ENCODE measurements at regions of chr1 and their contacts with region 1.

Region 1: DNA sequence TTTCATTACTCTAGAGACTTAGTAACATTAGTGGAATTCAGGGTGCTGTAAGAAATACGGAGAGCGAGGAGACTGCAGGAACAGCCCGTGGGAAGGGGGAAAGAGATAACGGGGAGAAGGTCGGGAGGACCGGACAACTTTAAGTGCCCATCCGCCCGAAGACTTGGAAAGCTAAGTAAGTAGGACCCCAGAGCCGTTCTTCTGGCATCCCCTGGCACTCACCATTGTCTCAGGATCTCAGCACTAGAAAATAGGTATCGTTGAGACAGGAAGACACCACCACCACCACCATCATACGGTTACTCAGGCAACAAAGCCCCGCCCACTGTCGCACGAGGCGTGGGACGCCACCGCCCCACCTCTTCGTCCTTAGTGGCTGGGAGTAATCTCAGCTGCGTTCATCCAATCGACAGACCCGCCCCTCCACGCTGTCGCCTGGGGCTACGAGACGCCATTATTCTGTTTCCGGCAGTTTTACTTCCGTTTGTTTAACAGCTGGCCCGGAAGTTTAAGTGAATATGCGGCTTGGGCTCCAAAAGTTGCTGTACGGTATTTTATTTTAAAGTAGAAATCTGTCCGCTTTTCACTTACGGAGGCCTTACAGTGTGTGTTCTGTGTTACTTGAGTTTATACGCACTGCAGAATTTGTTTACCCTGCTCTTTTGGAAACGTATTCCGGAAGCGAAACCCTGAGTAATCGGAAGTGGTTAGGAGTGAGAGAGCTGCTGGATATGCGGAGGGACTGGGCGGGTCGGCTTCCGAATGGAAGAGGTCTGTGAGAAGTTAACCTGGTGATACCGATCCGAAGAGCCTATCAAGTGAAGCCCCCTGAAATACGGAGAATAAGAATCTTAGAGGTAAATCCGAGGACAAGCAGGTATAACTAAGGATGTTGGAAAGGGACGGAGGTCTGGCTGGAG is at the starts of genes BLZF1 and NME7:
- DNase-seq: peak; percentile 97 to 99
- ATAC-seq: peak; percentile 98 to 100 (median 99)
- H3K4me3 ChIP-seq: peak within 1 kb of the TSS; percentile 70
- H3K4me3 Mint-ChIP-seq: no peak within 1 kb of the TSS
- H3K27ac ChIP-seq: peak within 1 kb of the TSS; percentile 77
- H3K27ac Mint-ChIP-seq: no peak within 1 kb of the TSS
- H3K4me1 ChIP-seq: peaks cover 10% of the 10 kb centered on the region
- H3K4me1 Mint-ChIP-seq: peaks cover 6 to 12% of the 10 kb centered on the region in 2 donors
- H3K27me3 ChIP-seq: no peaks in the 10 kb centered on the region
- H3K27me3 Mint-ChIP-seq: no peaks in the 10 kb centered on the region
- CTCF ChIP-seq: no peak
- total RNA-seq, gene BLZF1: 13.2 to 21.6 (median 18.2) TPM
- total RNA-seq, gene NME7: 5.2 to 9.9 (median 9.8) TPM

Region 2: GRCh38 chr1:167936068-167936929 is 1431.4 kb before region 1 on chr1 and contains the start of gene DCAF6:
- intact Hi-C with region 1: loop called (anchors 5 kb)
- DNase-seq: peak; percentile 95 to 99
- ATAC-seq: peak; percentile 81 to 93 (median 84)
- H3K4me3 ChIP-seq: peak within 1 kb of the TSS; percentile 90
- H3K4me3 Mint-ChIP-seq: peak within 1 kb of the TSS; percentile 93
- H3K27ac ChIP-seq: peak within 1 kb of the TSS; percentile 95
- H3K27ac Mint-ChIP-seq: peak within 1 kb of the TSS; percentile 93 to 98
- H3K4me1 ChIP-seq: peaks cover 8% of the 10 kb centered on the region
- H3K4me1 Mint-ChIP-seq: peaks cover 34 to 41% of the 10 kb centered on the region in 2 donors
- H3K27me3 ChIP-seq: no peaks in the 10 kb centered on the region
- H3K27me3 Mint-ChIP-seq: no peaks in the 10 kb centered on the region
- CTCF ChIP-seq: no peak
- total RNA-seq, gene DCAF6: 21.8 to 31.8 (median 27.8) TPM

Region 3: GRCh38 chr1:168225476-168226190 is 1142.1 kb before region 1 on chr1 and contains the start of gene SFT2D2:
- intact Hi-C with region 1: loop called (anchors 5 kb)
- DNase-seq: peak; percentile 83 to 88
- ATAC-seq: peak; percentile 95 to 97 (median 96)
- H3K4me3 ChIP-seq: peak within 1 kb of the TSS; percentile 91
- H3K4me3 Mint-ChIP-seq: peak within 1 kb of the TSS; percentile 90
- H3K27ac ChIP-seq: peak within 1 kb of the TSS; percentile 81
- H3K27ac Mint-ChIP-seq: peak within 1 kb of the TSS; percentile 87 to 94
- H3K4me1 ChIP-seq: peaks cover 38% of the 10 kb centered on the region
- H3K4me1 Mint-ChIP-seq: peaks cover 47 to 54% of the 10 kb centered on the region in 2 donors
- H3K27me3 ChIP-seq: no peaks in the 10 kb centered on the region
- H3K27me3 Mint-ChIP-seq: no peaks in the 10 kb centered on the region
- CTCF ChIP-seq: no peak
- total RNA-seq, gene SFT2D2: 91.8 to 118 (median 116) TPM

Region 4: DNA sequence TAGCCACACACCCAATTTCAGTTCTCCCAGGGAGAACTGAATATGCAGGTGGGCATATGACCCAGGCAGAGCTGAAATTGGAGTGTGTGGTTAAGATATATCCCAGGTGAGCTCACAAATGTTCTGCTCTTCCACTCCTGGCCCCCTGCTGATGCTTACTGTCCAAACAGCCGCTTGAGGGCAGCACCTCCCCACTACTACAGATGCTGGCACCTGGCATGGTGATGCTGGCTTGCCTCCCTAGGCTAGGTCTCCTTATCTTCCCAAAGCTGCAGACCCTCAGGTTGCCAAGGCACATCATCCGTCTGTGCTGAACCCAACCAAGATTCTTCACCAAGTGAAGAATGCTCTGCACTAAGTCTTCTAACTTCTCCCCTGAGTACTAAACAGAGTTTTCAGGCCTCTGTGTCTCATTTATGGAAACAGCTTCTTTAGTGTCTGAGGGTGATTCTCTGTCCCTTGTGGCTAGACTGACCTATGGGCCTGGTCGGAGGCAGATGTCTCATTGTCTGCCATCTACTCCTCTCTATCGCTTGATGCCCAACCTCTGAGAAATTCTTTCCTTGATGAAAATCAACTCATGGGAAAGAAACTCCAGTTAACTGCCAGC is 764.1 kb before region 1 on chr1:
- intact Hi-C with region 1: loop called (anchors 1 kb)
- DNase-seq: peak; percentile 60 to 81
- ATAC-seq: peak; percentile 74 to 98 (median 93)
- H3K4me3 ChIP-seq: no peak overlapping the region
- H3K4me3 Mint-ChIP-seq: no peak overlapping the region
- H3K27ac ChIP-seq: no peak overlapping the region
- H3K27ac Mint-ChIP-seq: no peak overlapping the region
- H3K4me1 ChIP-seq: no peaks in the 10 kb centered on the region
- H3K4me1 Mint-ChIP-seq: peaks cover 0 to 4% of the 10 kb centered on the region in 2 donors
- H3K27me3 ChIP-seq: no peaks in the 10 kb centered on the region
- H3K27me3 Mint-ChIP-seq: peaks cover 2 to 8% of the 10 kb centered on the region in 2 donors
- CTCF ChIP-seq: peak; percentile 82

Region 5: GRCh38 chr1:169312084-169312954 is 55.4 kb before region 1 on chr1:
- intact Hi-C with region 1: loop called (anchors 5 kb)
- DNase-seq: peak; percentile 44 to 56
- ATAC-seq: peak; percentile 87 to 94 (median 91)
- H3K4me3 ChIP-seq: no peak overlapping the region
- H3K4me3 Mint-ChIP-seq: peak overlapping the region; percentile 4
- H3K27ac ChIP-seq: no peak overlapping the region
- H3K27ac Mint-ChIP-seq: peak overlapping the region; percentile 54 to 67
- H3K4me1 ChIP-seq: peaks cover 3% of the 10 kb centered on the region
- H3K4me1 Mint-ChIP-seq: peaks cover 18 to 19% of the 10 kb centered on the region in 2 donors
- H3K27me3 ChIP-seq: no peaks in the 10 kb centered on the region
- H3K27me3 Mint-ChIP-seq: no peaks in the 10 kb centered on the region
- CTCF ChIP-seq: no peak

Region 6: GRCh38 chr1:169451218-169451845 is 83.6 kb after region 1 on chr1:
- intact Hi-C with region 1: no loop called
- DNase-seq: no peak
- ATAC-seq: no peak
- H3K4me3 ChIP-seq: no peak overlapping the region
- H3K4me3 Mint-ChIP-seq: no peak overlapping the region
- H3K27ac ChIP-seq: no peak overlapping the region
- H3K27ac Mint-ChIP-seq: no peak overlapping the region
- H3K4me1 ChIP-seq: no peaks in the 10 kb centered on the region
- H3K4me1 Mint-ChIP-seq: peaks cover 0 to 5% of the 10 kb centered on the region in 2 donors
- H3K27me3 ChIP-seq: peaks cover 2% of the 10 kb centered on the region
- H3K27me3 Mint-ChIP-seq: peaks cover 11 to 38% of the 10 kb centered on the region in 2 donors
- CTCF ChIP-seq: no peak

Region 7: GRCh38 chr1:169653873-169654272 is 286.1 kb after region 1 on chr1:
- intact Hi-C with region 1: no loop called
- DNase-seq: no peak
- ATAC-seq: no peak
- H3K4me3 ChIP-seq: no peak overlapping the region
- H3K4me3 Mint-ChIP-seq: no peak overlapping the region
- H3K27ac ChIP-seq: no peak overlapping the region
- H3K27ac Mint-ChIP-seq: no peak overlapping the region
- H3K4me1 ChIP-seq: peaks cover 13% of the 10 kb centered on the region
- H3K4me1 Mint-ChIP-seq: peaks cover 53 to 56% of the 10 kb centered on the region in 2 donors
- H3K27me3 ChIP-seq: no peaks in the 10 kb centered on the region
- H3K27me3 Mint-ChIP-seq: no peaks in the 10 kb centered on the region
- CTCF ChIP-seq: no peak

Region 8: DNA sequence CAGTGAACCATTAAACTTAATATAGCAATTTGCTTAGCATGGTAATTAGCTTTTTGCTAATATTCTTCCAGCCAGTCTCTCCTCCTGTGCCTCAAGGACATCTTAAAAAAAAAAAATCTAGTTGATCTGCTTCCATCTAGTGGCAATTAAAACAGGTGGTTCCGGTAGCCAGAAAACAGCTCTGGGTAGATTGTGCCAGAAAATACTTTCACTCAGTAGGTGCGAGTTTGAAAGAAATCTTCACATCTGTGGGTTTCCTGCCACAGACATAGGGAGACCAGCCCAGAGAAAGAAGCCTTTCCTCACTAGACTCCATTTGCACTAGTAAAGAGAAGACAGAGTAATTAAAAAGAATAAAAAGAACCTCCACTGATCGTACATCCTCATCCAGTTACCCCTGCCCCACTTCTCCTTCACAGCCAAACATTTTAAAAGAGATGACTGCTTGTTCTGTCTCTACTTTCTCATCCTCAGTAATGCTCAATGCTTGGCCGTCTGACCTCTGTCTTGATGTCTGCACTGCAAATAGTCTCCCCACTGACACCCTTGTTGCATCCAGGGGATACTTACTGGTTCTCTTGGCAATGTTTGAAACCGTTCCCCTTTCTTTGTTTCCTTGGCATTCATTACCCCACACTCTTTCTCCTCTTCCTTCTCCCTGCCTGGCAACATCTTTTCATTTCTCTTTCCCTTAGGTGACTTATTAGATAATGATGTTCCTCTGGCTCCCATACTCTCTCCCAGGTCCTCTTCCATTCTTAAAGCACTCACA is 326.7 kb after region 1 on chr1:
- intact Hi-C with region 1: loop called (anchors 5 kb)
- DNase-seq: peak; percentile 28 to 83
- ATAC-seq: peak; percentile 60 to 80 (median 77)
- H3K4me3 ChIP-seq: no peak overlapping the region
- H3K4me3 Mint-ChIP-seq: peak overlapping the region; percentile 59
- H3K27ac ChIP-seq: peak overlapping the region; percentile 74
- H3K27ac Mint-ChIP-seq: peak overlapping the region; percentile 80 to 89
- H3K4me1 ChIP-seq: peaks cover 60% of the 10 kb centered on the region
- H3K4me1 Mint-ChIP-seq: peaks cover 82 to 88% of the 10 kb centered on the region in 2 donors
- H3K27me3 ChIP-seq: no peaks in the 10 kb centered on the region
- H3K27me3 Mint-ChIP-seq: no peaks in the 10 kb centered on the region
- CTCF ChIP-seq: peak; percentile 20